BJ (cell line): ENCODE measurements at regions of chr2 and their contacts with region 1.

Region 1: GRCh38 chr2:118032169-118033013 is 18.5 kb upstream of the CCDC93 start:
- DNase-seq: no peak
- H3K4me3 ChIP-seq: no peak overlapping the region
- H3K27me3 ChIP-seq: peaks cover 2% of the 10 kb centered on the region
- CTCF ChIP-seq: peak; percentile 73

Region 2: DNA sequence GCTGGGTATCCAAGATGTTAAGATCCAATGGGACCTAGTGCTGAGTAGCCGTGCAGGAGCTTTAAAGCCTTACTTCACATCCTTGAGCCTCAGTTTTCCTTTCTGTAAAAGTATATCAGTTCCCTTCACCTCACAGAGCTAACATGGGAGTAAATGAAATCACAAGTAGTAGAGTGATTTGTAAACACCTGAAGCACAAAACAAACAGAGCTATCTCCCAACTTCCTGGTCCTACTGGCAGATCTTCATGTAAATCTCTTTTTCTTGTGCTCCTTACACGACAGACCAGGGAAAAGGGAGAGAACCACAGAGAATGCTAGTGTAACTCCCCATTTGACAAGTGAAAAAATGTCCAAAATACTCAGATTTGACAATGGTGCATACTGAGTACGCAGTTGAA is 35.9 kb before region 1 on chr2:
- CTCF ChIA-PET with region 1: no interaction called
- POLR2A ChIA-PET with region 1: no interaction called
- DNase-seq: no peak
- H3K4me3 ChIP-seq: no peak overlapping the region
- H3K27me3 ChIP-seq: no peaks in the 10 kb centered on the region
- CTCF ChIP-seq: no peak

Region 3: GRCh38 chr2:118013724-118014491 is 18.5 kb before region 1 on chr2 and contains the start of gene CCDC93:
- CTCF ChIA-PET with region 1: interaction called, 11 read pairs
- POLR2A ChIA-PET with region 1: no interaction called
- DNase-seq: peak; percentile 31
- H3K4me3 ChIP-seq: peak within 1 kb of the TSS; percentile 61
- H3K27me3 ChIP-seq: no peaks in the 10 kb centered on the region
- CTCF ChIP-seq: no peak
- polyA plus RNA-seq, gene CCDC93: 12.8 and 17.3 TPM in 2 replicates

Region 4: GRCh38 chr2:118021361-118021760 is 11.0 kb before region 1 on chr2:
- CTCF ChIA-PET with region 1: interaction called, 13 read pairs
- POLR2A ChIA-PET with region 1: no interaction called
- DNase-seq: no peak
- H3K4me3 ChIP-seq: no peak overlapping the region
- H3K27me3 ChIP-seq: peaks cover 1% of the 10 kb centered on the region; the same call in 1 of the 2 replicates
- CTCF ChIP-seq: no peak

Region 5: GRCh38 chr2:118046634-118047210 is 14.3 kb after region 1 on chr2:
- CTCF ChIA-PET with region 1: interaction called, 17 read pairs
- POLR2A ChIA-PET with region 1: no interaction called
- DNase-seq: no peak
- H3K4me3 ChIP-seq: no peak overlapping the region
- H3K27me3 ChIP-seq: peaks cover 2% of the 10 kb centered on the region; the same call in 1 of the 2 replicates
- CTCF ChIP-seq: peak; percentile 59

Region 6: GRCh38 chr2:118061135-118061955 is 29.0 kb after region 1 on chr2:
- CTCF ChIA-PET with region 1: interaction called, 17 read pairs
- POLR2A ChIA-PET with region 1: no interaction called
- DNase-seq: no peak
- H3K4me3 ChIP-seq: no peak overlapping the region
- H3K27me3 ChIP-seq: no peaks in the 10 kb centered on the region
- CTCF ChIP-seq: peak; percentile 55